CD4-positive, alpha-beta T cell (primary cell): ENCODE measurements at regions of chr16 and their contacts with region 1.

Region 1: DNA sequence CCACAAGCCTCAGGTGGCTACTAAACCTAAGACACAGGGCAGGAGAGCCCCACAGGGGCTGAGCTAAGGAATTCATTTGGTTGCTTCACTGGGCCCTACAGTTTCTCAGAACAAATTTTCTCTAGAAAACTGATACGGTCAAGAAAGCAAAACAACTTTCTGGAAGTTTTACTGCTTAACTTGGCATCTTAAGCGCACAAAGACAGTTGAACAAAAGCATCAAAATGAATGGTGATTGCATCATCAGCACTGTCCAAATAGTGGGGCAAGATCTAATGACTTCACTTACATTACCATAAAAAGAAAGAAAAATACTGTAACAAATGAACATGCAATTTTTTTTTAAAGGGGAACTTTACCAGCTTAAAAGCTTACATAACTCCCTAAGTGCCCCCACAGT is 47.6 kb downstream of the XPO6 start:
- DNase-seq: no peak
- ATAC-seq: no peak
- H3K4me3 ChIP-seq: no peak overlapping the region
- H3K4me3 Mint-ChIP-seq: peak overlapping the region; percentile 15
- H3K27ac ChIP-seq: peak overlapping the region in 1 of 2 donors; percentile 31
- H3K27ac Mint-ChIP-seq: peak overlapping the region; percentile 87
- H3K4me1 ChIP-seq: peaks cover 49% of the 10 kb centered on the region
- H3K4me1 Mint-ChIP-seq: peaks cover 95% of the 10 kb centered on the region
- H3K27me3 ChIP-seq: no peaks in the 10 kb centered on the region
- H3K27me3 Mint-ChIP-seq: no peaks in the 10 kb centered on the region
- CTCF ChIP-seq: no peak

Region 2: DNA sequence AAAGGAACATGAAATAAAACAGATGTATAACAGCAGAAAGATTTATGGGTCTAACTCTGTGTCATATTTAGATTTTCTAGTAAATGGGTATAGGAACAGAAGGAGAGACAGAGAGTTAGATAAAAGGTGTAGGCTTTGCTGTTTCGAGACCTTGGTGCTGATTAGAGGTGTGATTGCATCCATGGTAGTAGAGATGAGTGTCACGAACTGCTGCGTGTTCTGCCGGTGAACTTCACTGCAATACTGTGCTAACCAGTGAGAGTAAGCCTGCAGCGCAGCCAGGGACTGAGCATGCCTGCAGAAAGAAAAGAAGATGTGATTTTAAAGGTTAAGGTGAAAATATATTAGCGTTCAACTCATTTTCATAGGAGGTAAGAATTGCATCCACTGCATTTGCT is 47.0 kb before region 1 on chr16:
- CTCF ChIA-PET with region 1: no interaction called
- POLR2A ChIA-PET with region 1: no interaction called
- intact Hi-C with region 1: no loop called
- DNase-seq: no peak
- ATAC-seq: no peak
- H3K4me3 ChIP-seq: no peak overlapping the region
- H3K4me3 Mint-ChIP-seq: no peak overlapping the region
- H3K27ac ChIP-seq: no peak overlapping the region
- H3K27ac Mint-ChIP-seq: peak overlapping the region; percentile 5
- H3K4me1 ChIP-seq: no peaks in the 10 kb centered on the region
- H3K4me1 Mint-ChIP-seq: peaks cover 7% of the 10 kb centered on the region
- H3K27me3 ChIP-seq: no peaks in the 10 kb centered on the region
- H3K27me3 Mint-ChIP-seq: no peaks in the 10 kb centered on the region
- CTCF ChIP-seq: no peak

Region 3: GRCh38 chr16:28193530-28194423 is 29.6 kb after region 1 on chr16:
- CTCF ChIA-PET with region 1: interaction called, 5 read pairs
- POLR2A ChIA-PET with region 1: interaction called, 4 read pairs
- intact Hi-C with region 1: loop called in 1 of 2 experiments (anchors 1 kb)
- DNase-seq: peak in 8 of 14 experiments; percentile 15 to 73 (median 27)
- ATAC-seq: peak; percentile 13
- H3K4me3 ChIP-seq: peak overlapping the region; percentile 36
- H3K4me3 Mint-ChIP-seq: peak overlapping the region; percentile 74
- H3K27ac ChIP-seq: peak overlapping the region; percentile 88 to 89
- H3K27ac Mint-ChIP-seq: peak overlapping the region; percentile 93
- H3K4me1 ChIP-seq: peaks cover 78% of the 10 kb centered on the region
- H3K4me1 Mint-ChIP-seq: peaks cover 86% of the 10 kb centered on the region
- H3K27me3 ChIP-seq: no peaks in the 10 kb centered on the region
- H3K27me3 Mint-ChIP-seq: no peaks in the 10 kb centered on the region
- CTCF ChIP-seq: no peak

Region 4: GRCh38 chr16:28231763-28232162 is 67.6 kb after region 1 on chr16:
- CTCF ChIA-PET with region 1: no interaction called
- POLR2A ChIA-PET with region 1: no interaction called
- intact Hi-C with region 1: no loop called
- DNase-seq: no peak
- ATAC-seq: no peak
- H3K4me3 ChIP-seq: no peak overlapping the region
- H3K4me3 Mint-ChIP-seq: no peak overlapping the region
- H3K27ac ChIP-seq: no peak overlapping the region
- H3K27ac Mint-ChIP-seq: no peak overlapping the region
- H3K4me1 ChIP-seq: no peaks in the 10 kb centered on the region
- H3K4me1 Mint-ChIP-seq: no peaks in the 10 kb centered on the region
- H3K27me3 ChIP-seq: no peaks in the 10 kb centered on the region
- H3K27me3 Mint-ChIP-seq: no peaks in the 10 kb centered on the region
- CTCF ChIP-seq: no peak